ENCODE measurements at regions of chr14 and their contacts with region 1.

Region 1: GRCh38 chr14:77067632-77068514 is 30.2 kb upstream of the CIPC start:
- DNase-seq: peak; percentile 52 to 84 (median 74)
- H3K4me3 ChIP-seq: no peak overlapping the region
- H3K27ac ChIP-seq: peak overlapping the region in 17 of 59 donors; percentile 1 to 54 (median 30)
- H3K27me3 ChIP-seq: no peaks in the 10 kb centered on the region
- CTCF ChIP-seq: peak; percentile 50 to 97 (median 93)

Region 2: DNA sequence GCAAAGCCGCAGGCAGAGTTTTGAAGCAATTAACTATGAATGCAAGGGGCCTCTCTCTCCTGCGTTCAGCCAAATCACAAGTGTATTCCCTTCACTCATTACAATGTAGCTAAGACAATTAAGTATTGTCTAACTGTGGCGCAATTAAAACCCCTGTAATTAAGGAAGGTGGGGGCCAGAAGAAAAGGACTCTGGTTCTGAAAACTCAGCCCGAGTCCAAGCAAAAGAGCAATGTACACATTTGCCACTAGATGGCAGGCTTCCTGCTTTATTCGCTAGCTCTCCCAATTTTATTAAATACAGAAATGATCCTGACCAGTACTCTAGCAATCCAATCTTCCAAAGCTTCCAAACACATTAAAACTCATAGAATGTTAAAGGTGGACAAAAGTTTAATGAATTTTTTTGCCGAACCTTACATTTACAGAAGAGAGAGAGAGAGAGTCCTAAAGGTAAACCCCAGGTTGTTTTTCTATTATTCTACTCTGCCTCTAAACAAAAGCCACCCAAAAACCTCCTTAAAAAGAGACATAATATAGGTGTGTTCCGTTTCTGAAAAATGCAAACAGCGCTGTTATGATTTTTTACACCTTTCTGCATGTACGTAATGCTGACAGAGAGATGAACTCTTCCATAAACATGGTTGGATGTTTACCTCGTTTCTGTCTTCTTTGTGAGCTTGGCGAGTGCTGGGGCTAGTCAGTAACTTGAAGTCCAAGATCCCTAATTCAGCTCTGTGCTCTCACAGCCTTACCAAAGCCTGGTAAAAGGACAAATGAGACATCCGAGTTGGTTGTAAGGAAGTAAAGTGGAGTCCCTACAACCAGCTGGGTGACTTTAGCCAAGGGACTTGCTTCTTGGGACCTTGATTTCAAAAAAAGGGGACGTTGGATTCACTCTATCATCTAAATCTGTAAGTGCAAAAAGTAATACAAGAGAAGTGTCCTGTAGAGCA is 357.5 kb before region 1 on chr14:
- intact Hi-C with region 1: loop called in 1 of 2 experiments (anchors 10 kb)
- DNase-seq: peak in 2 of 10 donors; percentile 35 to 40
- H3K4me3 ChIP-seq: no peak overlapping the region
- H3K27ac ChIP-seq: peak overlapping the region in 5 of 59 donors; percentile 8 to 32 (median 27)
- H3K27me3 ChIP-seq: no peaks in the 10 kb centered on the region
- CTCF ChIP-seq: peak; percentile 50 to 92 (median 85)

Region 3: GRCh38 chr14:76876076-76876475 is 191.8 kb before region 1 on chr14:
- intact Hi-C with region 1: loop called (anchors 1 to 2 kb)
- DNase-seq: peak in 8 of 10 donors; percentile 40 to 81 (median 72)
- H3K4me3 ChIP-seq: no peak overlapping the region
- H3K27ac ChIP-seq: no peak overlapping the region
- H3K27me3 ChIP-seq: peaks cover 0 to 2% (median 0%) of the 10 kb centered on the region in 45 donors
- CTCF ChIP-seq: peak; percentile 60 to 99 (median 95)

Region 4: GRCh38 chr14:76947078-76947837 is 120.6 kb before region 1 on chr14:
- intact Hi-C with region 1: loop called in 1 of 2 experiments (anchors 1 kb)
- DNase-seq: peak; percentile 88 to 96 (median 94)
- H3K4me3 ChIP-seq: peak overlapping the region in 48 of 59 donors; percentile 0 to 46 (median 32)
- H3K27ac ChIP-seq: peak overlapping the region; percentile 27 to 94 (median 87)
- H3K27me3 ChIP-seq: no peaks in the 10 kb centered on the region
- CTCF ChIP-seq: peak in 55 of 56 donors; percentile 39 to 88 (median 72)

Region 5: GRCh38 chr14:77028384-77029231 is 39.3 kb before region 1 on chr14 and contains the start of gene IRF2BPL:
- intact Hi-C with region 1: loop called in 1 of 2 experiments (anchors 2 kb)
- DNase-seq: peak; percentile 96 to 98 (median 97)
- H3K4me3 ChIP-seq: peak within 1 kb of the TSS; percentile 49 to 94 (median 83)
- H3K27ac ChIP-seq: peak within 1 kb of the TSS; percentile 93 to 100 (median 100)
- H3K27me3 ChIP-seq: no peaks in the 10 kb centered on the region
- CTCF ChIP-seq: peak in 10 of 56 donors; percentile 7 to 35 (median 20)
- total RNA-seq, gene IRF2BPL: 30.1 to 62.8 (median 41.3) TPM

Region 6: GRCh38 chr14:77040059-77040740 is 27.7 kb before region 1 on chr14:
- intact Hi-C with region 1: loop called in 1 of 2 experiments (anchors 2 kb)
- DNase-seq: peak; percentile 93 to 99 (median 96)
- H3K4me3 ChIP-seq: peak overlapping the region in 58 of 59 donors; percentile 4 to 63 (median 44)
- H3K27ac ChIP-seq: peak overlapping the region; percentile 82 to 100 (median 98)
- H3K27me3 ChIP-seq: no peaks in the 10 kb centered on the region
- CTCF ChIP-seq: peak in 12 of 56 donors; percentile 15 to 38 (median 23)

Region 7: GRCh38 chr14:77097700-77098528 is 30.0 kb after region 1 on chr14 and contains the start of gene CIPC:
- intact Hi-C with region 1: loop called in 1 of 2 experiments (anchors 2 kb)
- DNase-seq: peak; percentile 100
- H3K4me3 ChIP-seq: peak within 1 kb of the TSS; percentile 64 to 96 (median 85)
- H3K27ac ChIP-seq: peak within 1 kb of the TSS; percentile 93 to 100 (median 98)
- H3K27me3 ChIP-seq: no peaks in the 10 kb centered on the region
- CTCF ChIP-seq: peak in 37 of 56 donors; percentile 3 to 56 (median 24)
- total RNA-seq, gene CIPC: 63.6 to 149 (median 93.0) TPM